H1 (cell line): ENCODE measurements at regions of chr3 and their contacts with region 1.

Region 1: DNA sequence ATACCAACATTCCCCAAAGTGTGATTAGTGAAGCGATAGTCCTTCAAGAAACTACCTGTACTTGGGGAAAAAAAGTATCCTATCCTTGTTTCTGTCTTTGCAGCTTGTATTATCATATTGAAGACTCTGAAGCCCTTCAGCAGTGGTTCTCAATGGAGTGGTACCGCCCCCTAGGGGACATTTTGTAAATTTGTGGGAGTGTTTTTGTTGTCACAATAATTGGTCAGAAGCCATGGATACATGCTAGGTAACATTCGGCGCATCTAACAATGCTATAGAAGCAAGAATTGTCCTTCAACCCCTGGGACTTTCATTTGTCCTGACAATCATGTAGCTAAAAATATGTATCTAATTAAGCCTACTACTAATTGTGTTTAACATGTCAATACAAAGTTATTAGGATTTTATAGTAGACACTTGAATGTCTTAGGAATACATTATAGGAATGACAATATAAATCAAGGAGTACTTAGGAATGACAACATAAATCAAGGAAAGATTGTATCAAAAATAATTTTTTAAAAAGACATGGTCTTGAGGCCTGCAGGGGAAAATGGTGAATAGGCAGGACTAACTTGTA is 53.7 kb downstream of the NMD3 start:
- DNase-seq: peak; percentile 13 to 57
- H3K4me3 ChIP-seq: no peak overlapping the region
- H3K27ac ChIP-seq: no peak overlapping the region
- H3K4me1 ChIP-seq: no peaks in the 10 kb centered on the region; a peak in 1 of 7 replicates
- H3K27me3 ChIP-seq: no peaks in the 10 kb centered on the region
- CTCF ChIP-seq: peak in 2 of 3 experiments; percentile 57 to 58; a peak in 2 of 4 replicates
- EP300 ChIP-seq: no peak
- POLR2A ChIP-seq: no peak
- RAD21 ChIP-seq: peak; percentile 59 to 68

Region 2: GRCh38 chr3:161096771-161097355 is 177.9 kb before region 1 on chr3:
- CTCF ChIA-PET with region 1: interaction called, 16 read pairs
- POLR2A ChIA-PET with region 1: no interaction called
- DNase-seq: peak; percentile 10 to 64
- H3K4me3 ChIP-seq: no peak overlapping the region
- H3K27ac ChIP-seq: no peak overlapping the region
- H3K4me1 ChIP-seq: no peaks in the 10 kb centered on the region
- H3K27me3 ChIP-seq: no peaks in the 10 kb centered on the region
- CTCF ChIP-seq: peak; percentile 35 to 77 (median 66)
- EP300 ChIP-seq: no peak
- POLR2A ChIP-seq: no peak
- RAD21 ChIP-seq: peak; percentile 64 to 75

Region 3: DNA sequence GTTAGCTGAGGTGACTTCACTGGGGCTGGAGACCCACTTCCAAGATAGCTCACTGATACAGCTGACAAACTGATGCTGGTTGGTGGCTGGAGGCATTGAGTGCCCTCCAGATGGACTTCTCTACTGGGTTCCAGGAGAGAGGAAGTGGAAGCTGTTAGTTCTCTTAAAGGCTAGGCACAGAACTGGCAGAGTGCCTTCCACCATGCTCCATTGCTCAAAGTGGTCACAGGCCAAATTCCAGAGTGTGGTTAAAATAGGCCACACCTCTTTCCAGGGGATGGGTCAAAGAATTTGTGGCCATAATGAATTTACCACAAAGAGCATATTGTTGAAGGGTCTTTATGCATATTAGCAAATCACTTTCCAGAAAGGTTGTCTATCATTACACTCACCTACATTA is 20.5 kb after region 1 on chr3:
- CTCF ChIA-PET with region 1: interaction called, 42 read pairs
- POLR2A ChIA-PET with region 1: no interaction called
- DNase-seq: no peak
- H3K4me3 ChIP-seq: no peak overlapping the region
- H3K27ac ChIP-seq: no peak overlapping the region
- H3K4me1 ChIP-seq: no peaks in the 10 kb centered on the region
- H3K27me3 ChIP-seq: no peaks in the 10 kb centered on the region
- CTCF ChIP-seq: no peak
- EP300 ChIP-seq: no peak
- POLR2A ChIP-seq: no peak
- RAD21 ChIP-seq: no peak

Region 4: GRCh38 chr3:161401389-161401788 is 126.6 kb after region 1 on chr3:
- CTCF ChIA-PET with region 1: interaction called, 41 read pairs
- POLR2A ChIA-PET with region 1: no interaction called
- DNase-seq: no peak
- H3K4me3 ChIP-seq: no peak overlapping the region
- H3K27ac ChIP-seq: no peak overlapping the region
- H3K4me1 ChIP-seq: no peaks in the 10 kb centered on the region
- H3K27me3 ChIP-seq: no peaks in the 10 kb centered on the region
- CTCF ChIP-seq: no peak
- EP300 ChIP-seq: no peak
- POLR2A ChIP-seq: no peak
- RAD21 ChIP-seq: no peak

Region 5: GRCh38 chr3:161415497-161416251 is 140.9 kb after region 1 on chr3:
- CTCF ChIA-PET with region 1: interaction called, 61 read pairs
- POLR2A ChIA-PET with region 1: no interaction called
- DNase-seq: no peak
- H3K4me3 ChIP-seq: no peak overlapping the region
- H3K27ac ChIP-seq: no peak overlapping the region
- H3K4me1 ChIP-seq: peaks cover 0 to 9% (median 2%) of the 10 kb centered on the region in 4 experiments; a peak in 1 of 7 replicates
- H3K27me3 ChIP-seq: no peaks in the 10 kb centered on the region
- CTCF ChIP-seq: no peak
- EP300 ChIP-seq: no peak
- POLR2A ChIP-seq: no peak
- RAD21 ChIP-seq: no peak